ENCODE measurements at regions of chr5 and their contacts with region 1.

Region 1: GRCh38 chr5:55344392-55344992 is 36.7 kb downstream of the MTREX start:
- DNase-seq: no peak
- CTCF ChIP-seq: peak; percentile 83

Region 2: GRCh38 chr5:55680353-55680752 is 335.9 kb after region 1 on chr5:
- in situ Hi-C with region 1: loop called (anchors 10 kb)
- DNase-seq: no peak
- CTCF ChIP-seq: no peak

Measured in GM13977 (cell line).